ENCODE measurements at regions of chr11 and their contacts with region 1.

Region 1: GRCh38 chr11:108222686-108223448 is at the start of gene ATM:
- DNase-seq: peak; percentile 99
- H3K4me3 Mint-ChIP-seq: no peak within 1 kb of the TSS
- H3K27ac Mint-ChIP-seq: no peak within 1 kb of the TSS
- H3K4me1 Mint-ChIP-seq: peaks cover 53% of the 10 kb centered on the region
- H3K27me3 Mint-ChIP-seq: no peaks in the 10 kb centered on the region
- total RNA-seq, gene ATM: 130 to 144 TPM

Region 2: DNA sequence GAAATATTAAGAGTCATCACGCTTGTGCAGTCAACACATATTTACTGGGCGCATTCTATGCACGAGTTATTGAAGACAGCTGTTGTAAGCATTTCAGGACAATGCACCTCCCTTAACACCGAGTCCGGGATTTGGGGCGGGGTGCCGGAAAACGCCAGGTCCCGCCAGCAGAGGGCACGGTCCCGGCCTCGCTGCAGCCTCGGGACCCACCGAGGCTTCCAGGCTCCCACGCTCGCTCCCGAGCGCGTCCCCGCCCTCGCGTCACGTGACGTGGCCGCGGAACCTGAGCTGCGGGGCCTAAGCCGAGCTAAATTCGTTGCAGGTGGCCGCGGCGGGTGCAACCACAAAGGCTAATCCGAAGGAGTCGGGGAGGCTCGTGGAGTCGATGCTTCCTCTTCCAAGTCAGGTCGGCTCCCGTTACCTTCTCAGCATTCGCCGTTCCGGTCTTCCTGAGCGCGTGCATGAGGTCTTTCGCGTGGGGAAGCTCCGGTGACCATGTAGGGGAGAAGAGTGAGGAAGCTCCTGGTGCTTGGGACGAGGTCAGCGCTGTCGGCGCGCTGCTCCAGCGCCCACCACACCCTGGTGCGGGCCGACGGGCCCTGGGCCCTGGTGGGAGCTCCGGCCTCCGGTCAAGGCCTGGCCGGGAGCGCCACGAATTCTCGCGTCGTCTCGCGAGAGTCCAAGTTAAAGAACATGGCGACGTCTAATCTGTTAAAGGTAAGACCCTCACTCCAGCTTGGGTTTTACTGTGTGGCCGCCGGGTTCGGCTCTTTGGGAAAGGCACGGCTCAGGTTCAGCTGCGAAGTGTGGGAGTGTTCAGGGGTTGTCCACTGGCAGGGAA is 214.0 kb before region 1 on chr11 and contains the start of gene CUL5:
- CTCF ChIA-PET with region 1: interaction called, 5 read pairs
- POLR2A ChIA-PET with region 1: interaction called, 27 read pairs
- DNase-seq: peak; percentile 90
- H3K4me3 Mint-ChIP-seq: peak within 1 kb of the TSS; percentile 98
- H3K27ac Mint-ChIP-seq: peak within 1 kb of the TSS; percentile 92
- H3K4me1 Mint-ChIP-seq: peaks cover 17% of the 10 kb centered on the region
- H3K27me3 Mint-ChIP-seq: no peaks in the 10 kb centered on the region
- total RNA-seq, gene CUL5: 27.1 to 28.3 TPM

Region 3: GRCh38 chr11:108125096-108125495 is 97.8 kb before region 1 on chr11:
- CTCF ChIA-PET with region 1: interaction called, 3 read pairs
- POLR2A ChIA-PET with region 1: interaction called, 23 read pairs
- DNase-seq: no peak
- H3K4me3 Mint-ChIP-seq: no peak overlapping the region
- H3K27ac Mint-ChIP-seq: peak overlapping the region; percentile 61
- H3K4me1 Mint-ChIP-seq: peaks cover 49% of the 10 kb centered on the region
- H3K27me3 Mint-ChIP-seq: no peaks in the 10 kb centered on the region

Region 4: DNA sequence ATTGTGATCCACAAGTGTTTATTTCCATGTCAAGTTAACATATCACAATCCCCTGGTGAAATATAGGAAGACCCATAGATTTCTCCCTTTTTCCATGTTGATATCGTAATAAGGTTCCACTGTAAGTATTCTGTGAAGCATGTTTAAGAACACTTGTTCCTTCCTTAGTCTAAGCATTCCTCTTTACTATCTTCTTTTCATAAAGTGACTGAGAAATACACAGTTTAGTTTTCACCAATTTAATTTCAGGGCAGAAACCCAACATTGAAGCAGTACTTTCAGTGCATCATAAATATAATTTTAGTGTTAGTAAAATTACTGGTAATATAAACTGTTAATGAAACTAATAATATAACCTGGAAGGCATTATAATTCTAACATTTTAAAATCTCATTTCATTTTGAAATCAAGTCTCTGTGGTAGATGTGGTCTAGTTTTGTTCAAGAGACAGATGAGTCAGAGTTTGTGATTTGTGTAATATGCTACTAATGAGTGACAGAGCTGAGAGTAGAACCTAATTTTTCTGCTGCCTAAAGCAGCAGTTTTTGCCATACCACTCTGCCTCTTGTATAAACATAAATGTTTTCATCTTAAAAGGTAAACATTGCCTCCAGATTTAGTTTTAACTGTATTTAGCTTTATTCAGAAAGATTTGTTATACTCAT is 79.4 kb after region 1 on chr11:
- CTCF ChIA-PET with region 1: interaction called, 3 read pairs
- POLR2A ChIA-PET with region 1: interaction called, 10 read pairs
- DNase-seq: no peak
- H3K4me3 Mint-ChIP-seq: no peak overlapping the region
- H3K27ac Mint-ChIP-seq: no peak overlapping the region
- H3K4me1 Mint-ChIP-seq: peaks cover 11% of the 10 kb centered on the region
- H3K27me3 Mint-ChIP-seq: no peaks in the 10 kb centered on the region

Region 5: DNA sequence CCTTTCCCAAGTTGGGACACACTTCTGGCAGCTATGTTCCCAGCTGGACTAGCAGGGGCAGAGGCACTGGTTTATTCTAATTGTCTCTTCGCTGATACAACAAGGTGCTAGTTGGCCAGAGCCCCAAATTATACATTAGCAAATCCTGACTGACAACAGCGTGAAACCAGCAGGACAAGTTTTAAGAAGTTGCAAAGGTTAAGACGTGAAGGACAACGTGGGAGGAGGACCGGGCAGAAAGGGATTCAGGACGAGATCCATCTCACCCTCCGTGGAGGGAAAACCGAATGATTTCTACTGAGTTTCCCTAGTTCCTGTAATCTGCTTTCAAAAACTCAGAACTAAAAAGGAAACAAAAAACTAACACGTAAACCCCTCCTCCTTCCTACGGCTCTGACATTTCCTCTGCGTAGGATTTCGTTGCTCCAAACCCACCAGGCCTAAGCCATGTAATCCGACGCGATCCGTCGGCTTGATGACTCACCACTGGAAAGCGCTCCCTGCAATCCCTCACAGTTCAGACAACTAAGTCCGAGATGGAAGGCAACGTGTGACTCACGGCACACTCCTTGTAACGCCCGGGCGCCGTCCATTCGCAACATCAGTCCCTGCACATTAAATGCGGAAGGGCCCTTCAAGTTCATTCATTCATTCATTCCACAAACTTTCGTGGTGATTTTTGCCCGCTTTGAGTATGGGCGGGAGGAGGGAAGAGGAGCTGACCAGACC is 274.6 kb after region 1 on chr11:
- CTCF ChIA-PET with region 1: interaction called, 4 read pairs
- POLR2A ChIA-PET with region 1: interaction called, 25 read pairs
- DNase-seq: peak; percentile 72
- H3K4me3 Mint-ChIP-seq: peak overlapping the region; percentile 100
- H3K27ac Mint-ChIP-seq: peak overlapping the region; percentile 100
- H3K4me1 Mint-ChIP-seq: peaks cover 31% of the 10 kb centered on the region
- H3K27me3 Mint-ChIP-seq: no peaks in the 10 kb centered on the region